Lower leg skin (tissue), 4 donors: ENCODE measurements at regions of chr21 and their contacts with region 1.

Region 1: DNA sequence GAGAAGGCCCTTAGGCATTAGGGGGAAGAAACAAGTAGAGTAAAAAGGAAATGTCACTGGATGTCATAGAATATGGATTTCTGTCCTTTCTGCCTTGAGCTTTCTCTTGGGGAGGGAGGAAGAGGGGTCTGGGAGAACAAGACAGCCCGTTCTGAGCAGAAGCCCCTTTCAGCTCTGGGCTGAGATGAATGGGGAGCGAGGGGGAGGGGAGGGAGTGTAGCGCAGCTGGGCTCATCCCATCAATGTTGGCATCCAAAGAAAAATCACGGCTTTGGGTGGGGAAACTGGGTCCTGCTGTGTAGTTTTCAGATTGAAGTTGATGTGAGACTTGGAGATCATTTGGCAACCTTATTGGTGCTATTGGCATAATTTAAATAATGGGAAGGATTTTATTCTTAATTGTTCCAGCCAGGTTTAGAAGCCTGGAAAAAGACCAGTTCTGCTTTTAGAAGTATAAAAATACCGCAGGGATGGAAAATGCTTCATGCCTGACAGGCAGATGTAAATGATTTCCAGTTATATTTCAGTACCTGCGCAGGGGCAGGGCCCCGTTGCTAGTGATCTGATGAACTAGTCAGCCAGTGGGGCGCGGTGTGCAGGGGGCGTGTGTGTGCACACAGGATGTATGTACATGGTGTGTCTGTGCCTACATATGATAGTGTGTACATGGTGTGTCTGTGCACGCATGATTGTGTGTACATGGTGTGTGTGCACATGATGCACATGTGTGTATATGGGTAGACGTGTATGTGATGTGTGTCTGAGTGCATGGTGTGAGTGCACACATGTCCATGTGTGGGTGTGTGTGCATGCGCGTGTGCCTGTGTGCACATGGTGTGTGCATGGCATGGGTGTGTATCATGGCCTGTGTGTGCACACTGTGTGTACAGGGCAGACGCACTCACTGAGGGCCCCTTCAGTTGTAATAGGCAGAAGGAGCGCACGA is 36.0 kb downstream of the ABCG1 start:
- DNase-seq: no peak
- H3K4me3 ChIP-seq: no peak overlapping the region
- CTCF ChIP-seq: no peak
- POLR2A ChIP-seq: no peak

Region 2: DNA sequence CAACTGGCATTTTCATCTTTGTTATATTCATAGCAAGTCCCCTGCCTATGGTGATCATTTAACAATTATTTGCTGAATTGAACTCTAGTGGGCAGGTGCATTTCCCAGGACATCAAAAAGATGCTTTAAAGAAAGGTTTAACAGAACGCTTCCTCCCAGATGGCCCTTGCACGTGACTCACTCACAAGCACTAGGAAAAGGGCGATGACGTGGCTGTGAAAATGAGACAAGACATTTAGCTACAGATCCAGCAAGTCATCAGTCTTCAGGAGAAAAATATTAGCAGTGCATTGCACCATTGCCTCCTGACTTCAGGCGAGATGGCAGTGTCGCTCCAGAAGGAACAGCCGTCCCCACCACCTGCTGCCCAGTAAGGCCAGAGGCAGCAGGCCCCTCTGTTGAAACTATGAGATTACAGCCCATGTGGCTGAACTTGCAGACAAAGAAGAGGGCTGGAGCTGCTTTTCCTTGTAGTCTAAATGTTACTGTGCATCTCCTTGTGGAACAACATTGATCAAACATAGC is 1445.2 kb before region 1 on chr21:
- intact Hi-C with region 1: no loop called
- DNase-seq: no peak
- H3K4me3 ChIP-seq: no peak overlapping the region
- CTCF ChIP-seq: no peak
- POLR2A ChIP-seq: no peak

Region 3: GRCh38 chr21:42151091-42151947 is 103.6 kb before region 1 on chr21:
- intact Hi-C with region 1: loop called (anchors 5 kb)
- DNase-seq: peak in 1 of 2 donors; percentile 77
- H3K4me3 ChIP-seq: no peak overlapping the region
- CTCF ChIP-seq: no peak
- POLR2A ChIP-seq: no peak

Region 4: DNA sequence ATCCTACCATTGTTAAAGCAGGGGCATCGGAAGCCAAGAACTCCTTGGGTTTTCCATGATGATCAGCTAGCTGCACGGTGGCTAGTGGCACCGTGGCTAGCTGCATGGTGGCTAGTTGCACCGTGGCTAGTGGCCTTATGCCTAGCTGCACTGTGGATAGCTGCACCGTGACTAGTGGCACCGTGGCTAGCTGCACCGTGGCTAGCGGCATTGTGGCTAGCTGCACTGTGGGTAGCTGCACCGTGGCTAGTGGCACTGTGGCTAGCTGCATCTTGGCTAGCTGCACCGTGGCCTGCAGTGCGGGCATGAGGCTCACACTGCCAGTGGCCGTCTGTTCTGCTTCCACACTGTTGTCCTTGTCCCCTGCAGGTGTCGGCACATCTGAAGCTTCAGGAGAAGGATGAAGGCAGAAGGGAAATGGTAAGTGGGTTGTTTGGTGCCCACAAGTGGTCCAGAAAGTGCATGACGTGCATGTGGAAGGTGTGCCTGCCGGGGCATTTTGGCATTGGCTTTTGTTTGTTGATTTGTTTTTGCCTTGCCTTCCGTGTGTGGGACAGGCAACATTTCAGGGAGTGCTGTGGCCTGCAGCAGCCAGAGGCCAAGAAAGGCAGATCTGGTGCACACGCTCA is 21.7 kb after region 1 on chr21:
- intact Hi-C with region 1: no loop called
- DNase-seq: no peak
- H3K4me3 ChIP-seq: no peak overlapping the region
- CTCF ChIP-seq: no peak
- POLR2A ChIP-seq: no peak